ENCODE measurements at regions of chr19 and their contacts with region 1.

Region 1: DNA sequence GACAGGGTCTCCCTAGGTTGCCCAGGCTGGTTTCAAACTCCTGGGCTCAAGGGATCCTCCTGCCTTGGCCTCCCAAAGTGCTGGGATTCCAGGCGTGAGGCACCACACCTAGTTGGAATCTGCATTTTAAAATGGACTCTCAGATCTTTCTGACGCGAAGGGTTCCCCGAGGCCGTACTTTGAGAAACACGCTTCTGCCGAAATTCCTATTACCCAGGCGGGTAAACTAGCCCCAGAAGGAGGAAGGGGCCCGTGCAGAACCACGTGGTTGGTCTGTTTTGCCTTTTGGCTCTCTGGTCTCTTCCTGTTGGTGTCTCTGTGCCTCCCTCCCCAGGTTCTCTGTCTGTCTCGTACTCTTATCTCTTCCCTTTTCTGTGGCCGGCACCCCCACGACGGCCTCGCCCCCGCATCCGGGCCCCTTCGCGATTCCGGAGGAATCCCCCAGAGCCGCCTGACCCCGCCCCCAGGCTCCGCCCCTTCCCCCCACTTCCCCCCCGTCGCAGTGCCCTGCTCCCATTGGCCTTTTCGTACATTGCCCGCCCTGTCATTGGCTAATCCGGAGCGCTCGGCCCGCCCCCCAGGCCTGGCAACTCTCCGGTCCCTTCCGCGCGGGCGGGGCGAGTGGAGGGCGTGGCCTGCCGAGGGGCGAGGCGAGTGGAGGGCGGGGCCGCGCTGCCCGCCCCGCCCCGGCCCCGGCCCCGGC is at the start of gene TNFAIP8L1:
- DNase-seq: peak; percentile 100
- ATAC-seq: peak; percentile 95
- H3K4me3 Mint-ChIP-seq: peak within 1 kb of the TSS; percentile 90
- H3K27ac Mint-ChIP-seq: peak within 1 kb of the TSS; percentile 97
- H3K4me1 Mint-ChIP-seq: peaks cover 26% of the 10 kb centered on the region
- H3K27me3 Mint-ChIP-seq: no peaks in the 10 kb centered on the region
- total RNA-seq, gene TNFAIP8L1: 14.1 to 15.4 TPM

Region 2: DNA sequence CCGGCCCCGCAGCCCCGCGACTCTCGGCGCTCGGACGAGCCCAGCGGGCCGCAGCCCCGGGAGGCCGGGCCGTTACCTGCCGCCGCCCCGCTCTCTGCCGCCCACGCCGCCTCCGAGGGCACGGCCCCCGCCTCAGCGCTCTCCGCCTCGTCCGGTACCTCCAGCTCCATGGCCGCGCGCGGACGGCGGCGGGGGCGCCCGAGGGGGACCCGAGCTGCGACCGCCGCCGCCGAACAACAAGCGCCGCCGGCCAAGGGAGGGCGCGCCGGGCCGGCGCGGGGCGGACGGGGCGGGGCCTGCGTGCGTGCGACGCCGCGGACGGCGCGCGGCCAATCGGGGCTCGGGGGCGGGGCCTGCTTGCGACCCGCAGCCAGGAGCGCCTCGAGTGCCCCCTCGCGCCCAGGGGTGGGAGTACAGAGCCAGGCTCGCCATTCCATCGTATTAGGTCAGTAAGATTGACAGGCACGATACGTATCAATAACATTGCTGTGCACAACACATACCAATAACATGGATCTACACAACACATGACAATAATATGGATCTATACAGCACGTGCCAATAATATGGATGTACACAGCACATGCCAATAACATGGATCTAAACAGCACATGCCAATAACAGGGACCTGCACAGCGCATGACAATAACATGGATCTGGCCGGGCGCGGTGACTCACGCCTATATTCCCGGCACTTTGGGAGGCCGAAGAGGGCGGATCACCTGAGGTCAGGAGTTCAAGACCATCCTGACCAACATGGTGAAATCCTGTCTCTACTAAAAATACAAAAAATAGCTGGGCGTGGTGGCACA is 938.6 kb before region 1 on chr19 and contains the start of gene PIP5K1C:
- CTCF ChIA-PET with region 1: no interaction called
- POLR2A ChIA-PET with region 1: no interaction called
- intact Hi-C with region 1: loop called in 1 of 2 experiments (anchors 2 kb)
- DNase-seq: peak; percentile 97
- ATAC-seq: peak; percentile 95
- H3K4me3 Mint-ChIP-seq: peak within 1 kb of the TSS; percentile 87
- H3K27ac Mint-ChIP-seq: peak within 1 kb of the TSS; percentile 80
- H3K4me1 Mint-ChIP-seq: peaks cover 17% of the 10 kb centered on the region
- H3K27me3 Mint-ChIP-seq: no peaks in the 10 kb centered on the region
- total RNA-seq, gene PIP5K1C: 14.6 to 15.3 TPM

Region 3: GRCh38 chr19:4400135-4400936 is 238.6 kb before region 1 on chr19 and contains the start of gene SH3GL1:
- CTCF ChIA-PET with region 1: no interaction called
- POLR2A ChIA-PET with region 1: interaction called, 3 read pairs
- intact Hi-C with region 1: loop called in 1 of 2 experiments (anchors 1 kb)
- DNase-seq: peak; percentile 95
- ATAC-seq: peak; percentile 54
- H3K4me3 Mint-ChIP-seq: peak within 1 kb of the TSS; percentile 93
- H3K27ac Mint-ChIP-seq: peak within 1 kb of the TSS; percentile 95
- H3K4me1 Mint-ChIP-seq: peaks cover 62% of the 10 kb centered on the region
- H3K27me3 Mint-ChIP-seq: no peaks in the 10 kb centered on the region
- total RNA-seq, gene SH3GL1: 42.0 to 46.8 TPM

Region 4: GRCh38 chr19:4547303-4548237 is 91.4 kb before region 1 on chr19:
- CTCF ChIA-PET with region 1: interaction called, 4 read pairs
- POLR2A ChIA-PET with region 1: no interaction called
- intact Hi-C with region 1: loop called in 1 of 2 experiments (anchors 1 kb)
- DNase-seq: peak; percentile 63
- ATAC-seq: peak; percentile 70
- H3K4me3 Mint-ChIP-seq: no peak overlapping the region
- H3K27ac Mint-ChIP-seq: no peak overlapping the region
- H3K4me1 Mint-ChIP-seq: no peaks in the 10 kb centered on the region
- H3K27me3 Mint-ChIP-seq: peaks cover 6% of the 10 kb centered on the region

Region 5: GRCh38 chr19:4597975-4598671 is 40.9 kb before region 1 on chr19:
- CTCF ChIA-PET with region 1: interaction called, 8 read pairs
- POLR2A ChIA-PET with region 1: no interaction called
- intact Hi-C with region 1: loop called in 1 of 2 experiments (anchors 2 kb)
- DNase-seq: peak; percentile 77
- ATAC-seq: peak; percentile 77
- H3K4me3 Mint-ChIP-seq: no peak overlapping the region
- H3K27ac Mint-ChIP-seq: no peak overlapping the region
- H3K4me1 Mint-ChIP-seq: peaks cover 7% of the 10 kb centered on the region
- H3K27me3 Mint-ChIP-seq: peaks cover 41% of the 10 kb centered on the region

Region 6: DNA sequence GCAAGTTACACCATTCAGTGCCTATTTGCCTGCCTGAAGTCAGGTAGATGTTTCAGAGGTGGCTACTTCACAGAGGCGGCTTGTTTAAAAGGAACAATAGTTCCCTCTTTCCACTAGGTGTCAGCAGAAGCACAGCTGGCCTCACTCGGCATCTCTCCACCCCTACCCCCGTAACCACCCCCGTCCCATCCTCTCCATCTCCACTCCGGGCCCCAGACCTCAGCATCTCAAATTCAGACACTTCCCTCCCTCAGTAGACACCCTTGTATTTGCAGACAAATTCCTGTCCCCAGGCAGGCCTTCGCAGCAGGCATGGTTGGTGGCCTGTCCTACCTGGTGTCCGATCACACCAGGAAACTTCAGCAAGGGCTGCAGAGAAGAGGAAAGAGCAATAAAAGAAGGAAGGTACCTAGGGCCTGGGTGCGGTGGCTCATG is 93.7 kb after region 1 on chr19:
- CTCF ChIA-PET with region 1: no interaction called
- POLR2A ChIA-PET with region 1: no interaction called
- intact Hi-C with region 1: no loop called
- DNase-seq: peak; percentile 76
- ATAC-seq: peak; percentile 90
- H3K4me3 Mint-ChIP-seq: no peak overlapping the region
- H3K27ac Mint-ChIP-seq: no peak overlapping the region
- H3K4me1 Mint-ChIP-seq: peaks cover 4% of the 10 kb centered on the region
- H3K27me3 Mint-ChIP-seq: peaks cover 4% of the 10 kb centered on the region

Region 7: GRCh38 chr19:4867534-4868285 is 228.7 kb after region 1 on chr19 and contains the start of gene PLIN3:
- CTCF ChIA-PET with region 1: no interaction called
- POLR2A ChIA-PET with region 1: no interaction called
- intact Hi-C with region 1: loop called in 1 of 2 experiments (anchors 1 kb)
- DNase-seq: peak; percentile 98
- ATAC-seq: peak; percentile 95
- H3K4me3 Mint-ChIP-seq: peak within 1 kb of the TSS; percentile 73
- H3K27ac Mint-ChIP-seq: peak within 1 kb of the TSS; percentile 63
- H3K4me1 Mint-ChIP-seq: peaks cover 20% of the 10 kb centered on the region
- H3K27me3 Mint-ChIP-seq: peaks cover 2% of the 10 kb centered on the region
- total RNA-seq, gene PLIN3: 26.9 to 27.5 TPM

Region 8: GRCh38 chr19:5719961-5720790 is 1081.2 kb after region 1 on chr19 and contains the starts of genes CATSPERD and LONP1:
- CTCF ChIA-PET with region 1: no interaction called
- POLR2A ChIA-PET with region 1: no interaction called
- intact Hi-C with region 1: loop called in 1 of 2 experiments (anchors 1 kb)
- DNase-seq: peak; percentile 99
- ATAC-seq: peak; percentile 84
- H3K4me3 Mint-ChIP-seq: peak within 1 kb of the TSS; percentile 98
- H3K27ac Mint-ChIP-seq: peak within 1 kb of the TSS; percentile 99
- H3K4me1 Mint-ChIP-seq: peaks cover 27% of the 10 kb centered on the region
- H3K27me3 Mint-ChIP-seq: no peaks in the 10 kb centered on the region
- total RNA-seq, gene CATSPERD: not detected
- total RNA-seq, gene LONP1: 287 to 315 TPM

Region 9: GRCh38 chr19:5803752-5804515 is 1165.0 kb after region 1 on chr19:
- CTCF ChIA-PET with region 1: no interaction called
- POLR2A ChIA-PET with region 1: no interaction called
- intact Hi-C with region 1: no loop called
- DNase-seq: peak; percentile 98
- ATAC-seq: peak; percentile 97
- H3K4me3 Mint-ChIP-seq: peak overlapping the region; percentile 63
- H3K27ac Mint-ChIP-seq: peak overlapping the region; percentile 47
- H3K4me1 Mint-ChIP-seq: peaks cover 21% of the 10 kb centered on the region
- H3K27me3 Mint-ChIP-seq: peaks cover 20% of the 10 kb centered on the region

Measured in activated CD4-positive, alpha-beta T cell treated with anti-CD3 and anti-CD28 coated beads for 36 hours (primary cell).